ENCODE measurements at regions of chr3 and their contacts with region 1.

Region 1: GRCh38 chr3:130850044-130850797 is 43.7 kb upstream of the ATP2C1 start:
- DNase-seq: peak; percentile 77
- ATAC-seq: peak; percentile 98
- H3K4me3 Mint-ChIP-seq: peak overlapping the region; percentile 26
- H3K27ac Mint-ChIP-seq: peak overlapping the region; percentile 26
- H3K4me1 Mint-ChIP-seq: peaks cover 21% of the 10 kb centered on the region
- H3K27me3 Mint-ChIP-seq: peaks cover 16% of the 10 kb centered on the region

Region 2: DNA sequence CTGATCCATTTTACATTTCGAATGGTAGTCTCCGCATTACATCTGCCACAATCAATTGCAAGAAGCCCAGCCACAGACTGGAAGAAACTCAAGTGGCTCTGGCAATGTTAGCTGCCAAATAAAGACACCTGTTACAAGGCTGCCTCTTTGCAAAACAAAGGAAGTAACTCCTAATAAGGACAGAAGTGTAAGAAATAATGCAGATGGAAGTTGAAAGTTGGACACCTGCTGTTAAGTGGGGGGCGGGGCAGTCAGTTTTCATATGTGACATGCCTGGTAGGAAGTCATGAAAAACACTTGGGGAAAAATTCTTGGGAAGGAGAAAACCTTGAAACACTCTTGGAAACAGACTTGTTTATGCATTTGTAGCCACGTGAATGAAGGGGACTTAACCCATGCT is 10.4 kb before region 1 on chr3:
- CTCF ChIA-PET with region 1: no interaction called
- POLR2A ChIA-PET with region 1: no interaction called
- intact Hi-C with region 1: no loop called
- DNase-seq: no peak
- ATAC-seq: no peak
- H3K4me3 Mint-ChIP-seq: no peak overlapping the region
- H3K27ac Mint-ChIP-seq: no peak overlapping the region
- H3K4me1 Mint-ChIP-seq: peaks cover 5% of the 10 kb centered on the region
- H3K27me3 Mint-ChIP-seq: peaks cover 2% of the 10 kb centered on the region

Region 3: DNA sequence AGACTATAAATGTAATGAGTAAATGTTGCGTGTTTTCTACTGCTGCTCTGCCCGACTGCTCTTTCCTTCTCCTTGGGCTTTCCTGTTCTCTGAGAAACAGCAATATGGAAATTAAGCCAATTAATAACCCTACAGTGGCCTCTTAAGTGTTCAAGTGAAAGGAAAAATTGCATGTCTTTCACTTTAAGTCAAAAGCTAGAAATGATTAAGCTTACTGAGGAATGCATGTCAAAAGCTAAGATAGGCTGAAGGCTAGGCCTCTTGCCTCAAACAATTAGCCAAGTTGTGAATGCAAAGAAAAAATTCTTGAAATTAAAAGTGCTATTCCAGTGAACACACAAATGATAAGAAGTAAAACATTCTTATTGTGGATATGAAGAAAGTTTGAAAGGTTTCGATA is 98.7 kb after region 1 on chr3:
- CTCF ChIA-PET with region 1: no interaction called
- POLR2A ChIA-PET with region 1: no interaction called
- intact Hi-C with region 1: loop called in 1 of 2 experiments (anchors 5 kb)
- DNase-seq: no peak
- ATAC-seq: peak; percentile 60
- H3K4me3 Mint-ChIP-seq: no peak overlapping the region
- H3K27ac Mint-ChIP-seq: no peak overlapping the region
- H3K4me1 Mint-ChIP-seq: peaks cover 20% of the 10 kb centered on the region
- H3K27me3 Mint-ChIP-seq: no peaks in the 10 kb centered on the region

Region 4: GRCh38 chr3:131242201-131242600 is 392.0 kb after region 1 on chr3:
- CTCF ChIA-PET with region 1: no interaction called
- POLR2A ChIA-PET with region 1: no interaction called
- intact Hi-C with region 1: no loop called
- DNase-seq: no peak
- ATAC-seq: no peak
- H3K4me3 Mint-ChIP-seq: no peak overlapping the region
- H3K27ac Mint-ChIP-seq: no peak overlapping the region
- H3K4me1 Mint-ChIP-seq: no peaks in the 10 kb centered on the region
- H3K27me3 Mint-ChIP-seq: no peaks in the 10 kb centered on the region